ENCODE measurements at regions of chr16 and their contacts with region 1.

Region 1: GRCh38 chr16:87203060-87203656 is 114.0 kb downstream of the C16orf95 start:
- DNase-seq: peak; percentile 77
- H3K4me3 ChIP-seq: no peak overlapping the region
- H3K27ac ChIP-seq: no peak overlapping the region
- H3K4me1 ChIP-seq: no peaks in the 10 kb centered on the region
- H3K27me3 ChIP-seq: peaks cover 0 to 9% of the 10 kb centered on the region in 2 experiments
- CTCF ChIP-seq: peak; percentile 97 to 98
- POLR2A ChIP-seq: no peak

Region 2: DNA sequence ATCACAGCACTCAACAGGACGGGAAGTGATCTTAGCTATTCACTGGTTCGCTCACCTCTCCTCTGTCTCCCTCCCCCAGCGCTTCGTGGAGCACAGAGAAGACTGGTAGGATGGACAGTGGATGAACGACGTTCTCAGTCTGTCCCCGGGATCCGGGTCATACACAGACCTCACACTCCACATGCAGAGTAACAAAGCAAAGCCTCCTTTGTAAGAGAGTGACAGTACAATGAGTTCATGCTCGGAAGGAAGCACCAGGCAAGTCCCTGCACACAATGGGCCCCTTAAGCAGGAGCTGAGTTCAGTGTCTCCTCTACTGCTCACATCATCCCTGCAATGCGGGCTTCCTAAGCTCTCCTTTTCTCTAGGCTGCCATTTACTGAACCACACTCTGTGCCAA is 242.9 kb before region 1 on chr16:
- CTCF ChIA-PET with region 1: no interaction called
- POLR2A ChIA-PET with region 1: no interaction called
- dilution Hi-C with region 1: no loop called
- intact Hi-C with region 1: no loop called
- DNase-seq: no peak
- H3K4me3 ChIP-seq: no peak overlapping the region
- H3K27ac ChIP-seq: no peak overlapping the region
- H3K4me1 ChIP-seq: no peaks in the 10 kb centered on the region
- H3K27me3 ChIP-seq: peaks cover 0 to 5% of the 10 kb centered on the region in 2 experiments
- CTCF ChIP-seq: no peak
- POLR2A ChIP-seq: no peak

Region 3: GRCh38 chr16:87190288-87191230 is 12.6 kb before region 1 on chr16:
- CTCF ChIA-PET with region 1: interaction called, 14 read pairs
- POLR2A ChIA-PET with region 1: no interaction called
- dilution Hi-C with region 1: no loop called
- intact Hi-C with region 1: no loop called
- DNase-seq: no peak
- H3K4me3 ChIP-seq: no peak overlapping the region
- H3K27ac ChIP-seq: no peak overlapping the region
- H3K4me1 ChIP-seq: peaks cover 9% of the 10 kb centered on the region
- H3K27me3 ChIP-seq: no peaks in the 10 kb centered on the region
- CTCF ChIP-seq: peak in 1 of 2 donors; percentile 35
- POLR2A ChIP-seq: no peak

Region 4: DNA sequence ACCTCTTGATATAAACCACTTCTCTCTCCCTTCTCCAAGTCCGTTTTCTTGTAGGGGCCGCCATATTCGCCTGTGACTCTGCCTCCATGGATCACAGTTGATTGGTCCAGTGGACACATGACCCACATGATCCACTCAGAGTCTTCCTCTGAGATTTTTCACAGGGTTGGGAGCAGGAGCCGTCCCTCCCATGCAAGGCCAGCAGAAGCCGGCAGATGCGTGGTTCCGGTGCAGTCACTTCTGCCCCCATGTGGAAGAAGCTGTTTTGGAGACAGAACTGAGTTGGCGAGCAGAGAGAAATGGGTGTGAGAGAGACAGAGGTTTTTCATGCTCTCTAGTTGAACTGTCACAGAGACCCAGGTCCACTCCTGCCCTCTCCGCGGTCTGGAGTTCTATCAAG is 30.8 kb after region 1 on chr16:
- CTCF ChIA-PET with region 1: interaction called, 17 read pairs
- POLR2A ChIA-PET with region 1: no interaction called
- dilution Hi-C with region 1: no loop called
- intact Hi-C with region 1: no loop called
- DNase-seq: peak; percentile 26
- H3K4me3 ChIP-seq: no peak overlapping the region
- H3K27ac ChIP-seq: no peak overlapping the region
- H3K4me1 ChIP-seq: no peaks in the 10 kb centered on the region
- H3K27me3 ChIP-seq: peaks cover 4 to 6% of the 10 kb centered on the region in 2 experiments
- CTCF ChIP-seq: peak in 1 of 2 donors; percentile 32
- POLR2A ChIP-seq: no peak

Region 5: DNA sequence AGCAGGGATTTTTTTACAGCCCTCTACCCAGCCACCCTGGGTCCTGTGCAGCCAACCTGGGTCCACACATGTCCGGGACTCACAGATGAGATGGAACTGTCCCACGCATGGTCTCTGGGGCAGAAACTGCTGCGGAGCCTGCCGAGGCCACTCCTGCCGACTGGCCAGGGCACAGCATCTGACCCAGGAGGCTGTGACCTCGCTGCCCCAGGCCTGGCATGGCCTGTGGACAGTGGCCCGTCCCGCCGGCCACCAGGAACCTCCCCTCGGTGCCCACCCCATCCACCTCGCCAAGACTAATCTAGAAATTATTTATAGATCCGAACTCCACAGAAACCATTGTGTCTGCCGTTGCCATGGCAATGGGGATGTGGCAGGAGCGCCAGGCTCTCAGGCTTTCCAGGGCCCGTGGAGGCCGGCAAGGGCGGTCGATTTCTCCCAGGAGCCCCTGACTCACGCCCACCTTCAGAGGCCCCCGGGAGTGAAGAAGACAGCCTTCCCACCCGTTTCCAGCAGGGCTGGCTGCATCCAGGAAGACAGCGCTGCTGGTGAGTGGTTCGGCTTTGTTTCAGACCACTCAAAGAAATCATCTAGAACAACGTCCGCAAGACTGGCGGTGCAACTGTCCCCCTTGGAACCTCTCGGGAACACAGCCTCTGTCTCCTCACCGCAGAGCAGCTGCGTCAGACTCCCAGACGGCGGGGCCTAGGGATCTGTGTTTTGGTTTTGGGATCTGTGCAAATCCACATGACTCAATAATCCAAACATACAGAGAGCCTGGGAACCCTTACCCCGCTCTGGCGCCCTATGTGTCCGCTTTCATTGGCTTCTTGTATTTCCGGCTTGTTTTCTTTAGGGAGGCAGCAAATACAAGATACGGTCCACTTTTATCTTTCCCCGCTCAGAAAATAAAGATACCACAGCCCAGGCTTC is 338.1 kb after region 1 on chr16:
- CTCF ChIA-PET with region 1: no interaction called
- POLR2A ChIA-PET with region 1: no interaction called
- dilution Hi-C with region 1: no loop called
- intact Hi-C with region 1: no loop called
- DNase-seq: no peak
- H3K4me3 ChIP-seq: no peak overlapping the region
- H3K27ac ChIP-seq: no peak overlapping the region
- H3K4me1 ChIP-seq: peaks cover 9% of the 10 kb centered on the region
- H3K27me3 ChIP-seq: peaks cover 0 to 2% of the 10 kb centered on the region in 2 experiments
- CTCF ChIP-seq: no peak
- POLR2A ChIP-seq: no peak